Naive thymus-derived CD4-positive, alpha-beta T cell (primary cell): ENCODE measurements at regions of chr10 and their contacts with region 1.

Region 1: DNA sequence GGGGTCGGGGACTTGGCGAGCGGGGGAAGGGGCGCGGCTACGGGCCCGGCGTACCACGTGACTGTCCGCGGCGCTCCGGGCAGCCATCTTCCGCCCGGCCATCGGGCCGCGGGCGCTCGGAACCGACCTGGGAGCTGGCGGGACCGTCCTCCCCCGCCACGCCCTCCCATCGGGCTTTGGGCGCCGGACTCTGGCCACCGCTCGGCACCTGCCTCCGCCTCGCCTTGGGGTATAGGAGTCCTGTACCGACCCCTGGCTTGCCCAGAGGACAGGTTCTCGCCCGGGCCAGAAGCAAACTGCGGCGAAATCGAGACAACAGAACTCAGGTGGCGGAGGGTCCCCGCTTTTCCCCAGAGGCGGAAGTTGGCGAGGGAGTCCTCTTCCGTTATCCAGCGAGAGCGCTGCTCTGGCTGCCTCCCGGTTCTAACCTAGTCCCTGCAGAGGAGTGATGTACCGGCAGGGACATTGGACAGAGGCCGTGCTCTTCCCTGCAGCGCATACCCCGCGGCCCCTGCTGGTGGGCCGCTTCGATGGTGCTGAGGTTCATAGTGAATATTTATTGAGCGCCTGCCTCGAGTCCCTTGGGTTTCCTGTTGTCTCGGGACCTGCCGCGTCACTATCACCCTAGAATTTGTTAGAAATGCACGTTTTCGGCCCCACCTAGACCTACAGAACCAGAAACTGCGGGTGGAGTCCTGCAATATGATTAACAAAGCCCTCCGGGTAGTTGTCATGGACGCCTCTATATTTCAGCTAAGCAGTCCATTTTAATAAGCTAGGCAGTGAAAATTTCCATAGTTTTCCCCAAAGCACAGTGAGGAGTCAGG is 1.3 kb upstream of the SGMS1 start:
- DNase-seq: peak in 8 of 9 donors; percentile 48 to 62 (median 58)
- ATAC-seq: peak; percentile 55
- H3K4me3 ChIP-seq: peak overlapping the region; percentile 97
- H3K4me3 Mint-ChIP-seq: peak overlapping the region; percentile 90 to 99 (median 96)
- H3K27ac ChIP-seq: peak overlapping the region; percentile 99
- H3K27ac Mint-ChIP-seq: peak overlapping the region; percentile 94 to 98 (median 95)
- H3K4me1 ChIP-seq: peaks cover 15 to 26% of the 10 kb centered on the region in 2 donors
- H3K4me1 Mint-ChIP-seq: peaks cover 13 to 45% (median 24%) of the 10 kb centered on the region in 7 donors
- H3K27me3 ChIP-seq: no peaks in the 10 kb centered on the region
- H3K27me3 Mint-ChIP-seq: peaks cover 0 to 6% (median 0%) of the 10 kb centered on the region in 5 donors

Region 2: GRCh38 chr10:49667991-49668390 is 957.1 kb before region 1 on chr10:
- CTCF ChIA-PET with region 1: no interaction called
- POLR2A ChIA-PET with region 1: no interaction called
- intact Hi-C with region 1: no loop called
- DNase-seq: no peak
- ATAC-seq: no peak
- H3K4me3 ChIP-seq: no peak overlapping the region
- H3K4me3 Mint-ChIP-seq: no peak overlapping the region
- H3K27ac ChIP-seq: no peak overlapping the region
- H3K27ac Mint-ChIP-seq: no peak overlapping the region
- H3K4me1 ChIP-seq: no peaks in the 10 kb centered on the region
- H3K4me1 Mint-ChIP-seq: no peaks in the 10 kb centered on the region
- H3K27me3 ChIP-seq: no peaks in the 10 kb centered on the region
- H3K27me3 Mint-ChIP-seq: peaks cover 9 to 51% (median 27%) of the 10 kb centered on the region in 5 donors

Region 3: DNA sequence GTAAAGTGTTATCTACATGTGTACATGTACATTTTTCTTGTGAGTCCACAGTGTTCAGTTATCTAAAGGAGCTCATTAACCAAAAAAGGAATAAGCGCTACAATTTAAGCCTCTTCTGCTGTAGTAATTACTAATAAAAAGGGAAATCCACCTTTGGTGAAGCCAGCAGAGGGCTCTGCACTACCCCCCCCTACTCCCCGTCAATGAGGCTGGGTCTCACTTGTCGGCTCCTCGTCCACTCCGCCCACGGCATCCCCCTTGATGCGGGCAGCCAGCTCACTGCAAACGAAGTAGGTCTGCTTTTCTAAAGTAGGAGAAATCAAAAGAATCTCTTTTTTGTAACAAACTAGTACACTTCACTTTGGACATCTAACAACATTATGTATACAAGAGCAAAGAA is 562.0 kb before region 1 on chr10:
- CTCF ChIA-PET with region 1: no interaction called
- POLR2A ChIA-PET with region 1: interaction called, 4 read pairs
- intact Hi-C with region 1: loop called in 1 of 2 experiments (anchors 10 kb)
- DNase-seq: no peak
- ATAC-seq: no peak
- H3K4me3 ChIP-seq: no peak overlapping the region
- H3K4me3 Mint-ChIP-seq: peak overlapping the region in 2 of 10 donors; percentile 32 to 79
- H3K27ac ChIP-seq: no peak overlapping the region
- H3K27ac Mint-ChIP-seq: no peak overlapping the region
- H3K4me1 ChIP-seq: peaks cover 0 to 5% of the 10 kb centered on the region in 2 donors
- H3K4me1 Mint-ChIP-seq: peaks cover 0 to 14% (median 8%) of the 10 kb centered on the region in 7 donors
- H3K27me3 ChIP-seq: no peaks in the 10 kb centered on the region
- H3K27me3 Mint-ChIP-seq: peaks cover 0 to 15% (median 0%) of the 10 kb centered on the region in 5 donors

Region 4: DNA sequence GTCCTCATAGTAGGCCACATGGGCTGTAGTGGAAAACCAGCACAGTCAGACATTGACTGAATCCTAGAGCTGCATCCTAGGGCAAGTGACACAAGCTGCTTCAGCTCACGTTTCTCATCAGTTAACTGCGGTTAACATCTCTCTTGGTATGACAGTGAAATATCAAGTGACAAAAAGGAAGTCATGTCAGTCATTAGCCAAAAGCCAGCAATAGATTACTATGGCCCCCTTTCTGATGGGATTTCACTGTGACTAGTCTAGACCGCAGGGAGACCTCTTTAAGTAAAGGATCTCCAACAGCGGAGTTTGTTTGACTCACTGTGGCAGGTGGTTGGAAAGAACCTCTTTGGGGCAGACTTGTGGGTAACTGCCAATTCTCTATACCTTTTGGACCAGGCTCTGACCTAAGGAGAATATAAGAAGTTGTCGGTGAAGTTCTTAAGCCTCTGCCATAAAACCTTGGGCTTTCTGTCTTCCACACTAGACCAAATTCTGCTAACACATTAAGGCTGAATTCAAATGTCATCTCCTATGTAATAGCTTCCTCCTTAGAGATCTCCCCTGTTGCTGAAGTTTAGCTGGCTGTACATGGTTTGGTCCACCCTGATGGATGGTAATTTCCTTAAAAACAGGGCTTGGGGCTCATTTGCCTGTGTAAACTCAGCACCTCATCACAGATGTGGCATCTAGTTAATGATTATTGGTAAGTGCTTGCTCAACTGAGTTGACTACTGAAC is 116.6 kb before region 1 on chr10:
- CTCF ChIA-PET with region 1: no interaction called
- POLR2A ChIA-PET with region 1: no interaction called
- intact Hi-C with region 1: loop called in 1 of 2 experiments (anchors 2 kb)
- DNase-seq: peak in 1 of 9 donors; percentile 29
- ATAC-seq: peak; percentile 49
- H3K4me3 ChIP-seq: no peak overlapping the region
- H3K4me3 Mint-ChIP-seq: no peak overlapping the region
- H3K27ac ChIP-seq: no peak overlapping the region
- H3K27ac Mint-ChIP-seq: peak overlapping the region in 1 of 9 donors; percentile 35
- H3K4me1 ChIP-seq: peaks cover 9 to 45% of the 10 kb centered on the region in 2 donors
- H3K4me1 Mint-ChIP-seq: peaks cover 31 to 76% (median 68%) of the 10 kb centered on the region in 7 donors
- H3K27me3 ChIP-seq: no peaks in the 10 kb centered on the region
- H3K27me3 Mint-ChIP-seq: no peaks in the 10 kb centered on the region

Region 5: DNA sequence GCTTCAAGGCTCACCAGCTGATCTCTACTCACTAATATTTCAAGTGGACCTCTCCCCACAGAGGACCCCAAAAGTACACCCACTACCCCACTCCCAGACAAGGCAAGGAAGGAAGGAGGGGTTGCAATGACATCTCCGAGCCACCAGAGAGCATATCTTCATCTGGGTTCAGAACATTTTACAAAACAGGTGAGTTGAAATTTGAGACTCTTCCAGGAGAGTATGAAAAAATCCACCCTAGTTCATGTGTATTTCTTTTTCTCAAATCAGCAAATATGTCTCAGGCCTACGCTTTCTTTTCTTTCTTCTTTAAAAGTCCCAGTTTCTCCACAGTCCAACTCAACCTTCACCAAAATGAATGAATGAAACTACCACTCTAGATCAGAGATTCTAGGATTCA is 63.3 kb before region 1 on chr10:
- CTCF ChIA-PET with region 1: interaction called, 9 read pairs
- POLR2A ChIA-PET with region 1: interaction called, 7 read pairs
- intact Hi-C with region 1: loop called (anchors 1 to 5 kb)
- DNase-seq: peak in 5 of 9 donors; percentile 12 to 38 (median 23)
- ATAC-seq: peak; percentile 27
- H3K4me3 ChIP-seq: no peak overlapping the region
- H3K4me3 Mint-ChIP-seq: peak overlapping the region in 1 of 10 donors; percentile 20
- H3K27ac ChIP-seq: no peak overlapping the region
- H3K27ac Mint-ChIP-seq: peak overlapping the region in 2 of 9 donors; percentile 6 to 32
- H3K4me1 ChIP-seq: no peaks in the 10 kb centered on the region
- H3K4me1 Mint-ChIP-seq: peaks cover 0 to 54% (median 30%) of the 10 kb centered on the region in 7 donors
- H3K27me3 ChIP-seq: no peaks in the 10 kb centered on the region
- H3K27me3 Mint-ChIP-seq: no peaks in the 10 kb centered on the region

Region 6: GRCh38 chr10:50605269-50606263 is 19.5 kb before region 1 on chr10:
- CTCF ChIA-PET with region 1: interaction called, 4 read pairs
- POLR2A ChIA-PET with region 1: interaction called, 5 read pairs
- intact Hi-C with region 1: loop called in 1 of 2 experiments (anchors 2 kb)
- DNase-seq: no peak
- ATAC-seq: peak; percentile 51
- H3K4me3 ChIP-seq: no peak overlapping the region
- H3K4me3 Mint-ChIP-seq: peak overlapping the region in 7 of 10 donors; percentile 2 to 67 (median 39)
- H3K27ac ChIP-seq: no peak overlapping the region
- H3K27ac Mint-ChIP-seq: peak overlapping the region in 5 of 9 donors; percentile 32 to 86 (median 68)
- H3K4me1 ChIP-seq: peaks cover 29 to 31% of the 10 kb centered on the region in 2 donors
- H3K4me1 Mint-ChIP-seq: peaks cover 30 to 86% (median 79%) of the 10 kb centered on the region in 7 donors
- H3K27me3 ChIP-seq: no peaks in the 10 kb centered on the region
- H3K27me3 Mint-ChIP-seq: no peaks in the 10 kb centered on the region

Region 7: DNA sequence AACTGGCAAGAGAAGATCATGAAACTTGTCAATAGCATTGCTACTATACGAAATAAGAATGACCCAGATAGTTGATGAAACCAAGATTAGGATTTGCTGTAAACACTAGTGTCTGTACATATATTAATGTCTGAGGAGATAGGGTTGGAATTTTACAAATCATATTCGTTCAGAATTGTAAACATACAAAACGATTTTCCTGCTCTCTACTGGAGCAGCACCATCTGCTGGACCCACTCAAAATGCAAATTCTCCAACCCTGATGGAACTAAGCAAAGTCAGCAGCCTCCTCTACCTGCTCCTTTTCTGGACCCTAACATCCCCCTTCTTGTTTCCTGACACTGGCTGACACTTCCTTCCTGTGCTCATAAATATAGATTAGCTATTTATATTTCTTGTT is 28.1 kb after region 1 on chr10:
- CTCF ChIA-PET with region 1: interaction called, 9 read pairs
- POLR2A ChIA-PET with region 1: interaction called, 12 read pairs
- intact Hi-C with region 1: loop called (anchors 1 kb)
- DNase-seq: peak in 5 of 9 donors; percentile 18 to 48 (median 30)
- ATAC-seq: peak; percentile 75
- H3K4me3 ChIP-seq: no peak overlapping the region
- H3K4me3 Mint-ChIP-seq: peak overlapping the region in 6 of 10 donors; percentile 0 to 55 (median 15)
- H3K27ac ChIP-seq: no peak overlapping the region
- H3K27ac Mint-ChIP-seq: peak overlapping the region in 1 of 9 donors; percentile 55
- H3K4me1 ChIP-seq: peaks cover 0 to 13% of the 10 kb centered on the region in 2 donors
- H3K4me1 Mint-ChIP-seq: peaks cover 11 to 25% (median 14%) of the 10 kb centered on the region in 7 donors
- H3K27me3 ChIP-seq: no peaks in the 10 kb centered on the region
- H3K27me3 Mint-ChIP-seq: peaks cover 0 to 13% (median 0%) of the 10 kb centered on the region in 5 donors